ENCODE measurements at regions of chr15 and their contacts with region 1.

Region 1: DNA sequence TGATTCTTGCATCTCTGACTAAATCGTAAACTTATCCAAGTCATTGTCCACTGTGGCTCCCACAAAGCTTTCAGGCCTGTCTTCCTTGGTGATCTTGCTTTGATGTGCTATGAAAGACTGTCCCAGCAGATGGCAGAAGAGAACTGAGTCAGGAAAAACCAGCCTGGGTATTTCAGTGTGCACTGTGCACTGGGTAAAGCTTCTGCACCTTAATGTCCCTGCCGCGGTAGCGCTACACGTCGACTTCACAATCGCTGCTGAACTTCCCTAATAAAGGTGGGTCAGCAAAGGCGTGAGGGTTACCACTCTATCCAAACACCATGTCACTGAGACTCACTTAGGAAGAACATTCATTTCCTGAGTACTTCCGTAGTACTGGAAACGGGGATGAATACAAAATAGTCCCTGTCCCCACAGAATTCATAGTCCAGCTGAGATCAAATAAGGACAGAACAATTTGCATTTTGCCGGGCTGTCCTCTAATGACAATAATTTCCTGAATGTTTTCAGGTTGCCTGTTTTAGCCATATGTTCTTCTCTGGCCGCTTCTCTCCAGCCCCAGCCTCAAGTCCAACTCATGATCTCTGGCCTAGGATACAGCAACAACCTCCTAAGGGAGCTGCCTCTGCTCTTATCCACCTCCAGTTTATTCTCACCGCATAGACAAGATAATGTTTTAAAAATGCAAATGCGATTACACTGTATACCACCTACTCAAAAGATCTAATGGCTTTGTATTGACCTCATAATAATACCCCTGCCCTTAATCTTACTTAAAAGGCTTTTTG is 83.6 kb upstream of the AKAP13 start:
- DNase-seq: peak; percentile 70
- H3K4me3 ChIP-seq: peak overlapping the region; percentile 13 to 28; a peak in 2 of 4 replicates
- H3K27ac ChIP-seq: no peak overlapping the region
- H3K4me1 ChIP-seq: no peaks in the 10 kb centered on the region; a peak in 1 of 4 replicates
- H3K27me3 ChIP-seq: no peaks in the 10 kb centered on the region
- CTCF ChIP-seq: peak; percentile 78
- EP300 ChIP-seq: no peak
- RAD21 ChIP-seq: peak; percentile 94

Region 2: DNA sequence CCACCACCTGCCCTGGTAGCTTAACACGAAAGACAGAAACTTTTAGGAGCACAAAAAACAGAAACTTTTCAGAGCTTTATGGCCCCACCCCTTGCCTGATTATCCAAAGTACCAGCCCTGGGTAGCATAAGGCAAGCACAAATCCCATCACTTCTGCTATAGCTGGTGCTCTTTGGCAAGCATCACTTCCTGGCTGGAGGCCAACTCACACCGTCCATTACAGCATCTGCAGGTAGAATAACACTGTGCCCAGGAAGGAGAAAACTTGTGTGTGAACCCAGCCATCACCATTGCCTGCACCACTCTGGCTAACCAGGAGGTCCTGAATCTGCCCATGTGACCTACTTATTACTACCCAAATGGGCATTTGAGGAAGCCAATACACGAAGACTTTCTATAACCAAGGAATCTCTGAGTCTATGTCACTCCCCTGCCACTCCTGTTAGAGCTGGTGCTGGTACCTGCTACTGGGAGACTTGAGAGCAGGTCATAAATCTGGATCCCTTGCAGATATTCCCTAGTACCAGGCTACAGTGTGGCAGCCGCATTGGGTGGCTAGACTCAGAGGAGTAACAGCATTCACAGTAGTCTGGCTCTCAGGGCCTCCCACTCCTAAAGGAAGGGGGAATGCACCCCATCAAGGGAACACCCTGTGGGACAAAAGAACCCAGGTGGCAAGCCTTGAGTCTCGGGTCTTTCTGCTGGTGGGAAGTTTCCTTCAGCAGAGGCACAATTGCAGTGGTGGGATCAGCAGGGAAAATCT is 10.3 kb after region 1 on chr15:
- CTCF ChIA-PET with region 1: interaction called, 15 read pairs
- POLR2A ChIA-PET with region 1: no interaction called
- DNase-seq: no peak
- H3K4me3 ChIP-seq: no peak overlapping the region
- H3K27ac ChIP-seq: no peak overlapping the region
- H3K4me1 ChIP-seq: no peaks in the 10 kb centered on the region
- H3K27me3 ChIP-seq: no peaks in the 10 kb centered on the region
- CTCF ChIP-seq: no peak
- EP300 ChIP-seq: no peak
- RAD21 ChIP-seq: no peak

Region 3: GRCh38 chr15:85485956-85486567 is 189.3 kb after region 1 on chr15:
- CTCF ChIA-PET with region 1: interaction called, 13 read pairs
- POLR2A ChIA-PET with region 1: no interaction called
- DNase-seq: peak; percentile 61
- H3K4me3 ChIP-seq: no peak overlapping the region; a peak in 1 of 4 replicates
- H3K27ac ChIP-seq: no peak overlapping the region; a peak in 1 of 4 replicates
- H3K4me1 ChIP-seq: peaks cover 8 to 16% of the 10 kb centered on the region in 2 experiments; a peak in 2 of 4 replicates
- H3K27me3 ChIP-seq: no peaks in the 10 kb centered on the region
- CTCF ChIP-seq: peak; percentile 86
- EP300 ChIP-seq: no peak
- RAD21 ChIP-seq: peak; percentile 81

Region 4: GRCh38 chr15:85494048-85494793 is 197.4 kb after region 1 on chr15:
- CTCF ChIA-PET with region 1: interaction called, 12 read pairs
- POLR2A ChIA-PET with region 1: no interaction called
- DNase-seq: no peak
- H3K4me3 ChIP-seq: no peak overlapping the region
- H3K27ac ChIP-seq: peak overlapping the region; percentile 73 to 98
- H3K4me1 ChIP-seq: peaks cover 7 to 44% of the 10 kb centered on the region in 2 experiments; a peak in 3 of 4 replicates
- H3K27me3 ChIP-seq: no peaks in the 10 kb centered on the region
- CTCF ChIP-seq: no peak
- EP300 ChIP-seq: 0 out of 4 replicates have a peak, but pooled peaks of 1 of the 2 experiments have one; percentile 11
- RAD21 ChIP-seq: no peak

Region 5: GRCh38 chr15:85831415-85832113 is 534.8 kb after region 1 on chr15:
- CTCF ChIA-PET with region 1: interaction called, 11 read pairs
- POLR2A ChIA-PET with region 1: no interaction called
- DNase-seq: peak; percentile 84
- H3K4me3 ChIP-seq: no peak overlapping the region; a peak in 1 of 4 replicates
- H3K27ac ChIP-seq: peak overlapping the region in 1 of 2 experiments; percentile 17; a peak in 1 of 4 replicates
- H3K4me1 ChIP-seq: peaks cover 0 to 20% of the 10 kb centered on the region in 2 experiments; a peak in 1 of 4 replicates
- H3K27me3 ChIP-seq: no peaks in the 10 kb centered on the region; the same call in 1 of the 2 replicates
- CTCF ChIP-seq: peak; percentile 70
- EP300 ChIP-seq: peak in 1 of 2 experiments; percentile 73; a peak in 1 of 4 replicates
- RAD21 ChIP-seq: peak; percentile 84

Measured in SK-N-SH (cell line).